CD8-positive, alpha-beta T cell (primary cell): ENCODE measurements at regions of chr4 and their contacts with region 1.

Region 1: GRCh38 chr4:118772081-118772766 is 63.7 kb downstream of the SEC24D start:
- DNase-seq: peak in 2 of 9 experiments; percentile 51 to 64
- ATAC-seq: peak; percentile 71
- H3K4me3 ChIP-seq: no peak overlapping the region
- H3K4me3 Mint-ChIP-seq: no peak overlapping the region
- H3K27ac ChIP-seq: no peak overlapping the region
- H3K27ac Mint-ChIP-seq: no peak overlapping the region
- H3K4me1 ChIP-seq: no peaks in the 10 kb centered on the region
- H3K4me1 Mint-ChIP-seq: no peaks in the 10 kb centered on the region
- H3K27me3 ChIP-seq: no peaks in the 10 kb centered on the region
- H3K27me3 Mint-ChIP-seq: no peaks in the 10 kb centered on the region
- CTCF ChIP-seq: peak; percentile 79

Region 2: DNA sequence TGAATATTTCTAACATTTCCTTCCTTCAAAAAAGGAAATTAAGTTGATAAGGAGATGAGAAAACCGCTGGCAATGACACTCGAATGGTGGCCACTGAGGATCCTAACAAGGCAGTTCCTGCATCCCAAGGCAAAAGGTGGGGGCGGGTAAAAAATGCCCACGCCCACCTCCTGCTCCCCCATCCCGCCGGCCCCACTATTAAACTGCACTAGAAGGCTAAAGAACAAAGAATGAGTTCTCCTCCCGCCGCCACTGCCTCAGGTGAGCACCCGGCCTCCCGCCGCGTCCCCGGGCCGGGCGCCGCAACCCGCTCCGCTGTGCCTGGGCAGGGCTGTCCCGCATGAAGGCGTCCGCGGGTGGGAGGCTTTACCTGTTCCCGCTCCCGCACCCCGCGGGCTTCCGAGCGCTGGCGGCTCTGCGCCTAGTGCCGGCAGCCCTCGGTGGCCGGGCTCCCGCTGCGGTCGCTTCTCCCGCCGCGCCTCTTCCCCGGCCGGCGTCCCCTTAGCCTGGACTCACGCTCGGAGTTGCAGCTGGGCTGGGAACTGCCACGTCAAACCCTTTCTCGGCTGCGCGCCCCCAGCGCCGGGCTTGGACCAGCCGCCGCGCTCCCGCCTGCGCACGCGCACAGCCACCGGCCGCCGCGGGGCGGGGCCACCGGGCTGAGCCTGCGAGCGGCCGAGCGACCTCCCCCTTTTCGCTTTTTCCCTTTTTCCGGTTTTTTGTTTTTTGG is 63.5 kb after region 1 on chr4 and contains the start of gene SEC24D:
- CTCF ChIA-PET with region 1: interaction called, 40 read pairs
- POLR2A ChIA-PET with region 1: interaction called, 4 read pairs
- intact Hi-C with region 1: loop called (anchors 1 kb)
- DNase-seq: peak; percentile 67 to 90 (median 79)
- ATAC-seq: peak; percentile 81
- H3K4me3 ChIP-seq: peak within 1 kb of the TSS; percentile 76 to 80
- H3K4me3 Mint-ChIP-seq: peak within 1 kb of the TSS; percentile 100
- H3K27ac ChIP-seq: peak within 1 kb of the TSS; percentile 69 to 87
- H3K27ac Mint-ChIP-seq: peak within 1 kb of the TSS; percentile 97
- H3K4me1 ChIP-seq: peaks cover 6% of the 10 kb centered on the region
- H3K4me1 Mint-ChIP-seq: peaks cover 26% of the 10 kb centered on the region
- H3K27me3 ChIP-seq: no peaks in the 10 kb centered on the region
- H3K27me3 Mint-ChIP-seq: no peaks in the 10 kb centered on the region
- CTCF ChIP-seq: no peak
- total RNA-seq, gene SEC24D: 16.7 to 17.2 TPM

Region 3: GRCh38 chr4:118974758-118975157 is 202.5 kb after region 1 on chr4:
- CTCF ChIA-PET with region 1: no interaction called
- POLR2A ChIA-PET with region 1: no interaction called
- intact Hi-C with region 1: loop called in 1 of 2 experiments (anchors 5 kb)
- DNase-seq: no peak
- ATAC-seq: no peak
- H3K4me3 ChIP-seq: no peak overlapping the region
- H3K4me3 Mint-ChIP-seq: no peak overlapping the region
- H3K27ac ChIP-seq: no peak overlapping the region
- H3K27ac Mint-ChIP-seq: no peak overlapping the region
- H3K4me1 ChIP-seq: no peaks in the 10 kb centered on the region
- H3K4me1 Mint-ChIP-seq: no peaks in the 10 kb centered on the region
- H3K27me3 ChIP-seq: no peaks in the 10 kb centered on the region
- H3K27me3 Mint-ChIP-seq: no peaks in the 10 kb centered on the region
- CTCF ChIP-seq: no peak

Region 4: DNA sequence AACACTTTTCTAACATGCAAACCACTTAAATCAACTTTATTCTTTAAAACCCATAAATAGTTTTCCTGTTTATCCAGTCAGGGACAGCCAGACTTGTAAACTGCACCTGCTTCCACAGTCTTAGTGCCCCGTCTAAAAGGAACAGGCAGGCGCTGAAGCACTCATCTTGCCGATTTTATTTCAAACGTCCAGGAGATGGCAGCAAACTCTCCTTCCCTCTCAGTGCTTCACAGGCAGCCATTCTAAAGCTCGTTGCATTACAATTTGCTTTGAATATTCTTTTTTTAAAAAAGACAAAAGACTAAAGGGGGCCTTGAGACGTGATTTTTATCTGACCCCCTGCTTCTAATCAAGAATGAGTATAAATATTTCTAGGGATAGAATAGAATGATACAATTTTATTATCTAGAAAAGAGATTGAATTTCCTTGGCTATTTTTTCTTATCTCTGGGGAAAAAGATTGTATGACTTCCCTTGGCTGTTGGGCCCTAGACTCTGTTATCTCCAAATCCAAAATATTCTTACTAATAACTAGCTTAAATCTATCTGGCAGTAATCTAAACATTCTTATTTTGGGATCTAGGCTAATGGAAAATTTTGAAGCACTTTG is 269.8 kb after region 1 on chr4:
- CTCF ChIA-PET with region 1: no interaction called
- POLR2A ChIA-PET with region 1: no interaction called
- intact Hi-C with region 1: loop called in 1 of 2 experiments (anchors 5 kb)
- DNase-seq: peak; percentile 7 to 82 (median 53)
- ATAC-seq: peak; percentile 95
- H3K4me3 ChIP-seq: no peak overlapping the region
- H3K4me3 Mint-ChIP-seq: no peak overlapping the region
- H3K27ac ChIP-seq: no peak overlapping the region
- H3K27ac Mint-ChIP-seq: no peak overlapping the region
- H3K4me1 ChIP-seq: no peaks in the 10 kb centered on the region
- H3K4me1 Mint-ChIP-seq: peaks cover 2% of the 10 kb centered on the region
- H3K27me3 ChIP-seq: no peaks in the 10 kb centered on the region
- H3K27me3 Mint-ChIP-seq: no peaks in the 10 kb centered on the region
- CTCF ChIP-seq: peak; percentile 66

Region 5: GRCh38 chr4:120049732-120050494 is 1277.7 kb after region 1 on chr4:
- CTCF ChIA-PET with region 1: interaction called, 3 read pairs
- POLR2A ChIA-PET with region 1: no interaction called
- intact Hi-C with region 1: loop called in 1 of 2 experiments (anchors 5 kb)
- DNase-seq: peak; percentile 46 to 80 (median 73)
- ATAC-seq: peak; percentile 98
- H3K4me3 ChIP-seq: no peak overlapping the region
- H3K4me3 Mint-ChIP-seq: peak overlapping the region; percentile 54
- H3K27ac ChIP-seq: no peak overlapping the region
- H3K27ac Mint-ChIP-seq: no peak overlapping the region
- H3K4me1 ChIP-seq: no peaks in the 10 kb centered on the region
- H3K4me1 Mint-ChIP-seq: peaks cover 2% of the 10 kb centered on the region
- H3K27me3 ChIP-seq: no peaks in the 10 kb centered on the region
- H3K27me3 Mint-ChIP-seq: no peaks in the 10 kb centered on the region
- CTCF ChIP-seq: peak; percentile 90